ENCODE measurements at regions of chr19 and their contacts with region 1.

Region 1: DNA sequence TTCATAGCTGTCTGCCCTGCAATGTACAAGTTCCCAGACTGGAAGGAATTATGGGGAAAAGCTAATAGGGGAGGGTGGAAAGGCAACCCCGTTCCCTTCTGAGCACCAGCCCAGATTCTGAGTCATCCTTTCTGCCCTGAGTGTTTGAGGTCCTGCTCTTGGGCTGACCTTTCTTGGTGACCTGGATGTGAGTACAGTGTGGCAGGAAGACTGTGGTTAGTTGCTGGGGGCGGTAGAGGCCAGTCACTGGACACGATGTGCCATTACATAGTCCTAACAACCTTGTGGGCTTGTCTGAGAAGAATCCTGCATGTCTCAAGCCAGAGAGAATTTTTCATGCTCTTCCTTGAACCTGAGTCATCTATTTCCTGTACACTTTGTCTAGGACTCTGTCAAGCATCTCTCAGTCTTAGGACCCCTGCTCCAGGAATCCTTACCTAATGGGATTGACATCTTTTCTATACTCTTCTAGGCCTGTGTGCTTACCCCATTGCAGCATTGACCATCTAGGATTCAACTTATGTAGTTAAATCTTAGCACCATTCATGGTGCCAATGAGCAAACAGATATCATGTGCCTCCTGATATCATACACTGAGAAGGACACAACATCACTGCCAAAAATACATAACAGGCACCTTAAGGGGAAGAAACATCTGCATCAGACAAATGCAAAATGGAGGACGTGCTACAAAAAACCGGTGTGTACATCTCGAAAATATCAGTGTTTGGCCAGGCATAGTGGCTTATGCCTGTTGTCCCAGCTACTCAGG is 8.1 kb upstream of the ANGPTL4 start:
- DNase-seq: peak; percentile 98
- H3K4me3 ChIP-seq: no peak overlapping the region
- H3K27ac ChIP-seq: peak overlapping the region; percentile 55
- H3K4me1 ChIP-seq: peaks cover 26% of the 10 kb centered on the region
- H3K27me3 ChIP-seq: no peaks in the 10 kb centered on the region
- CTCF ChIP-seq: no peak

Region 2: GRCh38 chr19:8174706-8175105 is 181.1 kb before region 1 on chr19:
- CTCF ChIA-PET with region 1: no interaction called
- dilution Hi-C with region 1: no loop called
- in situ Hi-C with region 1: no loop called
- intact Hi-C with region 1: no loop called
- DNase-seq: peak; percentile 99
- H3K4me3 ChIP-seq: no peak overlapping the region
- H3K27ac ChIP-seq: peak overlapping the region; percentile 54
- H3K4me1 ChIP-seq: peaks cover 9% of the 10 kb centered on the region
- H3K27me3 ChIP-seq: no peaks in the 10 kb centered on the region
- CTCF ChIP-seq: no peak

Region 3: GRCh38 chr19:8396563-8397203 is 40.9 kb after region 1 on chr19:
- CTCF ChIA-PET with region 1: interaction called, 14 read pairs
- dilution Hi-C with region 1: no loop called
- in situ Hi-C with region 1: loop called (anchors 5 to 10 kb)
- intact Hi-C with region 1: loop called (anchors 1 kb)
- DNase-seq: peak; percentile 55
- H3K4me3 ChIP-seq: no peak overlapping the region
- H3K27ac ChIP-seq: peak overlapping the region; percentile 42
- H3K4me1 ChIP-seq: peaks cover 45% of the 10 kb centered on the region
- H3K27me3 ChIP-seq: no peaks in the 10 kb centered on the region
- CTCF ChIP-seq: peak; percentile 73 to 85

Region 4: DNA sequence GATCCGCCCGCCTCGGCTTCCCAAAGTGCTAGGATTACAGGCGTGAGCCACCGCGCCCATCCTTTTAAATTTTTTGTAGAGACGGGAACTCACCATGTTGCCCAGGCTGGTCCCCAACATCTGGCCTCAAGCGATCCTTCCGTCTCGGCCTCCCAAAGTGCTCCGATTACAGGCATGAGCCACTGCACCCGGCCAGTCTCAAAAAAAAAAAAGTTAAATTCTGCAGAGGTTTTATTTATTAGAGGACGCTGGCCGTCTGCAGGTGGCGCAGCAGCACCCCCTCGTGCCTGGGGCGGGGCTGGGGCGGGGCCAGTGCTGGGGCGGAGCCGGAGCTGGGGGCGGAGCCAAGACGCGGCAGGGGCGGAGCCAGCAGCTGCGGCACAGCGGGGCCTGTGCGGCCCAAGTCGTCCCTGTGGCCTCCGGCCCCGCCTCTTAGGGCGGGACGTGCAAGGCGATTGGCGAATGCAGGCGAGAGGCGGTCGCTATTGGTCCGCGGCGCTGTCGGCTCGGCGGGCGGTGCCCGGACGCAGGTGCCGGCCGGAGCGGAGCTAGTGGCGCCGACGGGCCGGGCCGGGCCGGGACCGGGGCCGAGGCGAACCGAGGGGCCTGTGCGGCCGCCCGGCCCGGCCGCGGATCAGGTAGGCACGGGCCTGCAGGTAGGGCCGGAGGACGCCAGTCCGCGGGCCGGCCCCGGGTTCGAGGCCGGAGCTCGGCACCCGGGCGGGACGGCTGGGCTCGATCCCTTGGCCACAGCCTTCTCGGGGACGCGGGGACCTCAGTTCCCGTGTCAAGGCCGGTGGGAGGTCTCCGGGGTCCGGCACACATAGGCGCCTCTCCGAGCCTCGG is 57.2 kb after region 1 on chr19 and contains the start of gene MARCHF2:
- CTCF ChIA-PET with region 1: interaction called, 18 read pairs
- dilution Hi-C with region 1: no loop called
- in situ Hi-C with region 1: loop called in 1 of 2 experiments (anchors 10 kb)
- intact Hi-C with region 1: loop called (anchors 5 kb)
- DNase-seq: peak; percentile 94
- H3K4me3 ChIP-seq: peak within 1 kb of the TSS; percentile 74 to 80 (median 80)
- H3K27ac ChIP-seq: no peak within 1 kb of the TSS
- H3K4me1 ChIP-seq: peaks cover 5% of the 10 kb centered on the region
- H3K27me3 ChIP-seq: no peaks in the 10 kb centered on the region
- CTCF ChIP-seq: peak; percentile 37 to 62
- total RNA-seq, gene MARCHF2: 21.9 to 48.3 TPM

Region 5: GRCh38 chr19:8487137-8487851 is 131.5 kb after region 1 on chr19:
- CTCF ChIA-PET with region 1: no interaction called
- dilution Hi-C with region 1: no loop called
- in situ Hi-C with region 1: no loop called
- intact Hi-C with region 1: loop called (anchors 5 kb)
- DNase-seq: no peak
- H3K4me3 ChIP-seq: no peak overlapping the region
- H3K27ac ChIP-seq: no peak overlapping the region
- H3K4me1 ChIP-seq: peaks cover 20% of the 10 kb centered on the region
- H3K27me3 ChIP-seq: no peaks in the 10 kb centered on the region
- CTCF ChIP-seq: no peak

Region 6: GRCh38 chr19:8580710-8581281 is 225.0 kb after region 1 on chr19:
- CTCF ChIA-PET with region 1: interaction called, 3 read pairs
- dilution Hi-C with region 1: no loop called
- in situ Hi-C with region 1: no loop called
- intact Hi-C with region 1: loop called (anchors 2 kb)
- DNase-seq: peak; percentile 42
- H3K4me3 ChIP-seq: no peak overlapping the region
- H3K27ac ChIP-seq: no peak overlapping the region
- H3K4me1 ChIP-seq: no peaks in the 10 kb centered on the region
- H3K27me3 ChIP-seq: no peaks in the 10 kb centered on the region
- CTCF ChIP-seq: peak; percentile 97 to 99

Measured in mammary epithelial cell (primary cell).